ENCODE measurements at regions of chr1 and their contacts with region 1.

Region 1: GRCh38 chr1:197521118-197521739 is 253.2 kb downstream of the CRB1 start:
- DNase-seq: peak; percentile 28
- CTCF ChIP-seq: peak; percentile 73

Region 2: DNA sequence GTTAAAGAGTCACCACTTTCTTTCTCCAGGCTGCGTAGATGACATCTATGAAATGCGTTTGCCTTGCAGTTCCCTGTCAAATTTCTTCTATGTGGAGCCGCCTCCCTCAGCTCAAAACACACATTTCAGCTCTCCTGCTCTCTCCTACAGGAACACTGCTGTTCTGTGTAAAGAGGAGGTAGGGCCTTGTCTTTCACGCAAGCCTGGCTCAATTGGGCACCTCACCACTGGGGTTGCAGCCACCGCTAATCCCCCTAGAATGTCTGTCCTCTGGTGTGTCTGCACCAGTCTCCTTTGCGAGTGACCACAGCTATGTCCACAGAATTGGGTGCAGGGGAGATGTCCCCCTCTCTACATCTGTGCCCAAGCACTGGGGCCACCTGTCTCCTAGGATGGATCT is 665.2 kb before region 1 on chr1:
- in situ Hi-C with region 1: no loop called
- DNase-seq: no peak
- CTCF ChIP-seq: no peak

Region 3: DNA sequence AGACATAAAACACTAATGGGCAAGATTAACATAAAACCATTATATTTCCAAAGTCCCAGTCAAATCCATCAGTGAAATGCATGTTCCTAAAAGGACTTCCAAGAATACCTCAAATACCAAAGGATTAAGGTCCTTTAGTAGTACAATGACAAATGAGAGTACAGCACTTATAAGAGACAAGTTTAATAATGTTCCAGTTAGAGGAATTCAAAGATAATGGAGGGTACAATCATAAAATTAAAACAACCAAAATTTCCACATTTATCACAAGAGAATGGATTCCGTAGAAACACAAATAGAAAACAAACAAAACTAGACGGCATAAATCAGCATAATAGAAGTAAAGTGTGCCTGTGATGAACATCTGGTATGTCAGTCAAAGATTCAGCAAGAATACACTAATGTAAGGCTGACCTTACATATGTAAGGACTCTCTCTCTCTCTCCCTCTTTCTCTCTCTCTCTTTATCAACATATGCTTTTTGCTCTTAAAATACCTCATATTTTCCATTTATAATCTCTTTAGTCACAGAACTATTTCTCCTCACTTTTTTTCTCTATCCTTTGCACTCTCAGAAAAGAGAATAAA is 348.4 kb after region 1 on chr1:
- in situ Hi-C with region 1: loop called (anchors 10 kb)
- DNase-seq: no peak
- CTCF ChIP-seq: no peak

Region 4: DNA sequence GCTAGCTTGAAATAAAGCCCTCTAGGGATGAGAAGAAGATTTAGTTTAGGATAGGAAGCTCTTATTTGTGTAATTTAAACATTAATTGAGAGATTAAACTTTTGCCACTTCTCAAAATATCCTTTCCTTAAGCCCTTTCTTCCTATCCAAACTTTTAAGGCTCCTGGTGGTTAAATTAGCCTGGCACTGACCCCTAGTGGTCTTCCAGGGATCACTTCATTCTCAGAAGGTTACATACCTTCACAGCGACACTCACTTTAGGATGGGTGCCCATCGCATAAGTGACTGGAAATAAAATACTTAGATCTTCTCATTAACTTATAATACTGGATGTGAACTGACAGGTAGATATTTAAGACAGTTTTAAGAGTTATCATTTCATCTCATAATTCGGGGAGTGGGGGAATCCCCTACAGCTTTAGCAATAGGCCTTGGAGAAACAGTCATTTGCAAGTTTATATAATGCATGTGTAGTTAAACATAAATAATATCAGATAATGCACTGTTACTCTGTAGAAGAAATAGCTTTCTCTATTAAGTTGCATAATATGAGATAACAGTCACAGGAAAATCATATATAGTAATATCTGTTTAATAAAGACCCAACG is 403.4 kb after region 1 on chr1:
- in situ Hi-C with region 1: no loop called
- DNase-seq: peak; percentile 59
- CTCF ChIP-seq: peak; percentile 67

Region 5: DNA sequence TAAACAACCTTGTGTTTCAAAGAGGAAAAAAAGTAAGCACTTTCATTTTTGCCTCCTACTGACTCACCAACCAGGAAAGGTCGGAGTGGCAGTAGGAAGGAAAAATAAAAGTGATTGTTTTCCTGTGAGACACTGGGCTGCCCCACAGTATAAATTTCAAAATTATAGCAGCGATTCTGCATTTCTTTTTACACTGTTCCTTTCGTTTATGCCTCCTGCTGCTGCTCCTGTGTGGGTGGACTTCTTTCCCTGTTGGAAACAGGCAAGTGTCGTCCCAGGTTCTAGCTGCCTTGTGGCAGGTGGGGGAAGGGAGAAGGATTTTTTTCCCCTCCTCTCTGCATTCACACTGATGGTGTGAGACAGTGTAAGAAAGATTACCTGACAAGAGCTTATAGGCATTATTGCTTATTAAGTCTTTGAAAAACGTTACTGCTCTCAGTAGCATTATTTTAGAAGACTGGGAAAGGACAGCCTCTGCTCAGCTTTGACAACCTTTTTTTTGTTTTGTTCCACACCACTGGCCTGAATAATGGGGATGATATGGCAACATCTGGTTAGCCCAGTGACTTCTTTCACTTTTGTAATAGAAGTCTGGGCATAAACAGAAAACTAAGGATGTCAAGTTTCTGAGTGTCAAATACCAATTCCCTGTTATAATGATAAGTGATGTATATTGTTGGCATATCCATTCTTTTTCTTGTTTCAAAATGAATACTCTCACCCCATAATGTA is 713.5 kb after region 1 on chr1:
- in situ Hi-C with region 1: no loop called
- DNase-seq: no peak
- CTCF ChIP-seq: no peak